HAP-1 (cell line): ENCODE measurements at regions of chr3 and their contacts with region 1.

Region 1: GRCh38 chr3:48151058-48151806 is 37.0 kb downstream of the CDC25A start:
- DNase-seq: peak; percentile 76 to 88
- H3K4me3 ChIP-seq: no peak overlapping the region
- H3K4me1 ChIP-seq: no peaks in the 10 kb centered on the region
- H3K27me3 ChIP-seq: no peaks in the 10 kb centered on the region

Region 2: GRCh38 chr3:47715928-47716327 is 435.3 kb before region 1 on chr3:
- in situ Hi-C with region 1: loop called (anchors 25 kb)
- DNase-seq: no peak
- H3K4me3 ChIP-seq: no peak overlapping the region
- H3K4me1 ChIP-seq: no peaks in the 10 kb centered on the region
- H3K27me3 ChIP-seq: no peaks in the 10 kb centered on the region

Region 3: DNA sequence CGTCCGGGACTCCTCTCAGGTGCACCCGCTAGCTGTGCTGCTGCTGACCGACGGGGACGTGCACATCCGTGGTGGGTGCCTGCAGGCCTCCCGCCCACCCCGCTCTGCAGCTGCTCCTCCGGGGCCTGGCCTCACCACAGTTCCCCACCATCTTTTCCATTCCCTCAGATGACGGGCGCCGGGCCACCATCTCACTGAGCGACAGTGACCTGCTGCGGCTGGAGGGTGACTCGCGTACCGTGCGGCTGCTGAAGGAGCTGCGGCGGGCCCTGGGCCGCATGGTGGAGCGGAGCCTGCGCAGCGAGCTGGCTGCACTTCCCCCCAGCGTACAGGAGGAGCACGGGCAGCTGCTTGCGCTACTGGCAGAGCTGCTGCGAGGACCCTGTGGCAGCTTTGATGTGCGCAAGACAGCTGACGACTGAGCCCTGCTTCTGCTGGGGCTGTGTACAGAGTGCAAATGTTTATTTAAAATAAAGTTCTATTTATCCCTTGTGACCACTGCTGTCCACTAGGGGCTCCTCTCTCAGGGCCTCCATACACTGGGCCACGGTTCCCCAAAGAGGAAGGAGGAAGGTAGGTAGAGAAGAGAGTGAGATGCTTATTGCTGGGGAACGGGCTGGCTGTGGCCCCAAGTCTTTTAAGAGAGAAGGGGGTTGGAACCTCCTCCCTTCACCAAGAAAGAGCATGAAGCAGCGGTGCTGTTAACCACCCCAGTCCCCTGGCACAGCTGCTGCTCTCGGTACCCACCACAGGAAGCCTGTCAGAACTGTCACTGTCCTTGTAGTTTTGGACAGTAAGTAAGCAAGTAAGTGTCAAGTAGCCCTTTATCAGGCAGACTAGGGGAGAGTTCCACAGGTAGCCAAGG is 301.3 kb before region 1 on chr3:
- in situ Hi-C with region 1: loop called (anchors 5 kb)
- DNase-seq: peak in 1 of 2 experiments; percentile 40
- H3K4me3 ChIP-seq: no peak overlapping the region
- H3K4me1 ChIP-seq: no peaks in the 10 kb centered on the region
- H3K27me3 ChIP-seq: no peaks in the 10 kb centered on the region